MCF 10A (cell line): ENCODE measurements at regions of chrX and their contacts with region 1.

Region 1: GRCh38 chrX:23782863-23783568 is at the start of gene SAT1:
- DNase-seq: peak; percentile 95
- H3K4me3 Mint-ChIP-seq: peak within 1 kb of the TSS; percentile 76
- H3K27ac Mint-ChIP-seq: peak within 1 kb of the TSS; percentile 80
- H3K4me1 Mint-ChIP-seq: peaks cover 23% of the 10 kb centered on the region
- H3K27me3 Mint-ChIP-seq: no peaks in the 10 kb centered on the region
- CTCF ChIP-seq: peak; percentile 56
- total RNA-seq, gene SAT1: 582 and 687 TPM in 2 replicates

Region 2: DNA sequence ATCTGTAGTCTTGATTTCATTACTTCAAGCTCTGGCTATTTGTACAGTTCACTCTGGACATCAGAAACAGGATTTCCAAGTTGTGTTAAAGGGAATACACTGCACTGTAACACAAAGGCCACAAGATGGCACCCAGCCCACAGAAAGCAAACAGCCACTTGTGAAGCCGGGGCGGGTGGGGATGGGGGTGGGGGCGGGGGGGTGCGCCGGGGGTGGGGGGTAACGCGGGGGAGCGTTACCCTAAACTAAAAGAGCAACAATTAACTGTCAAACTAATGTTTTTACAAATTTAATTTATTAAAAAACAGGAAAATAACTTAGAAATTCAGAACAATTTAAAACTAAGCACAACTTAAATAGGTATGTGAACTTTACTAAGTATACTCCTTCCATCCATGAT is 88.4 kb before region 1 on chrX:
- CTCF ChIA-PET with region 1: interaction called, 3 read pairs
- POLR2A ChIA-PET with region 1: no interaction called
- intact Hi-C with region 1: loop called (anchors 2 kb)
- DNase-seq: peak; percentile 75
- H3K4me3 Mint-ChIP-seq: no peak overlapping the region
- H3K27ac Mint-ChIP-seq: no peak overlapping the region
- H3K4me1 Mint-ChIP-seq: no peaks in the 10 kb centered on the region
- H3K27me3 Mint-ChIP-seq: no peaks in the 10 kb centered on the region
- CTCF ChIP-seq: peak; percentile 70

Region 3: GRCh38 chrX:23756157-23756559 is 26.9 kb before region 1 on chrX:
- CTCF ChIA-PET with region 1: interaction called, 4 read pairs
- POLR2A ChIA-PET with region 1: no interaction called
- intact Hi-C with region 1: loop called (anchors 1 kb)
- DNase-seq: peak; percentile 79
- H3K4me3 Mint-ChIP-seq: no peak overlapping the region
- H3K27ac Mint-ChIP-seq: no peak overlapping the region
- H3K4me1 Mint-ChIP-seq: peaks cover 6% of the 10 kb centered on the region
- H3K27me3 Mint-ChIP-seq: no peaks in the 10 kb centered on the region
- CTCF ChIP-seq: peak; percentile 65

Region 4: GRCh38 chrX:23803931-23804381 is 20.9 kb after region 1 on chrX:
- CTCF ChIA-PET with region 1: interaction called, 5 read pairs
- POLR2A ChIA-PET with region 1: interaction called, 111 read pairs
- intact Hi-C with region 1: loop called (anchors 1 kb)
- DNase-seq: peak; percentile 97
- H3K4me3 Mint-ChIP-seq: peak overlapping the region; percentile 62
- H3K27ac Mint-ChIP-seq: peak overlapping the region; percentile 59
- H3K4me1 Mint-ChIP-seq: peaks cover 30% of the 10 kb centered on the region
- H3K27me3 Mint-ChIP-seq: no peaks in the 10 kb centered on the region
- CTCF ChIP-seq: no peak

Region 5: DNA sequence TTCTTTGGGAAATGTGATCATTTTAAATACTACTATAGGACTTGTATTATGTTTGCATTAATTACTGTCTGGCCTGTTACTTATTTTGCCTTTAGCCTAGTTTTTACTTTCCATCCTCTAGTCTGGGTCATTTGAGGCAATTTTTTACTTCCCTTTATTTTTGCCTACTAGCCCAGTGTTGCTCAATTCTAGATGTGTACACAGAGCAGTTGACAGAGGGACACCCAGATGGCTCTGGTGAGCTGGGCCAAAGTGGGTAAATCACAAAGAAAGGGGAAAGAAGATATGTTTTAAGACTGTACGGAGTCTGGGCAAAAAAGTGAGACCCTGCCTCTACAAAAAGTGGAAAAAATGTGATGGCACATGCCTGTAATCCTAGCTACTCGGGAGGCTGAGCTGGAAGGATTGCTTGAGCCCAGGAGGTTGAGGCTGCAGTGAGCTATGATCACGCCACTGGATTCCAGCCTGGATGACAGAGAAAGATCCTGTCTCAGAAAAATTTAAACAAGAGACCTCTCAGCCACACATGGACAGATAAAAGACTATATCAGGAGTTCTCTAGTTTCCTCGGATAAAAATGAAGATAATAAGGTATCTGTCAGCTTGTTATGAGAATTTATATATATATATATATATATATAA is 89.0 kb after region 1 on chrX:
- CTCF ChIA-PET with region 1: no interaction called
- POLR2A ChIA-PET with region 1: no interaction called
- intact Hi-C with region 1: no loop called
- DNase-seq: no peak
- H3K4me3 Mint-ChIP-seq: no peak overlapping the region
- H3K27ac Mint-ChIP-seq: peak overlapping the region; percentile 20
- H3K4me1 Mint-ChIP-seq: no peaks in the 10 kb centered on the region
- H3K27me3 Mint-ChIP-seq: peaks cover 22% of the 10 kb centered on the region
- CTCF ChIP-seq: no peak

Region 6: GRCh38 chrX:23883737-23884354 is 100.8 kb after region 1 on chrX:
- CTCF ChIA-PET with region 1: interaction called, 5 read pairs
- POLR2A ChIA-PET with region 1: interaction called, 13 read pairs
- intact Hi-C with region 1: loop called (anchors 5 kb)
- DNase-seq: peak; percentile 87
- H3K4me3 Mint-ChIP-seq: peak overlapping the region; percentile 30
- H3K27ac Mint-ChIP-seq: peak overlapping the region; percentile 65
- H3K4me1 Mint-ChIP-seq: peaks cover 19% of the 10 kb centered on the region
- H3K27me3 Mint-ChIP-seq: no peaks in the 10 kb centered on the region
- CTCF ChIP-seq: no peak

Region 7: GRCh38 chrX:23907498-23908218 is 124.6 kb after region 1 on chrX and contains the starts of genes APOO and CXorf58:
- CTCF ChIA-PET with region 1: interaction called, 54 read pairs
- POLR2A ChIA-PET with region 1: interaction called, 140 read pairs
- intact Hi-C with region 1: no loop called
- DNase-seq: peak; percentile 86
- H3K4me3 Mint-ChIP-seq: peak within 1 kb of the TSS; percentile 69
- H3K27ac Mint-ChIP-seq: peak within 1 kb of the TSS; percentile 66
- H3K4me1 Mint-ChIP-seq: no peaks in the 10 kb centered on the region
- H3K27me3 Mint-ChIP-seq: peaks cover 30% of the 10 kb centered on the region
- CTCF ChIP-seq: peak; percentile 48
- total RNA-seq, gene APOO: 35.9 and 37.2 TPM in 2 replicates
- total RNA-seq, gene CXorf58: not detected in 2 replicates